ENCODE measurements at regions of chr2 and their contacts with region 1.

Region 1: DNA sequence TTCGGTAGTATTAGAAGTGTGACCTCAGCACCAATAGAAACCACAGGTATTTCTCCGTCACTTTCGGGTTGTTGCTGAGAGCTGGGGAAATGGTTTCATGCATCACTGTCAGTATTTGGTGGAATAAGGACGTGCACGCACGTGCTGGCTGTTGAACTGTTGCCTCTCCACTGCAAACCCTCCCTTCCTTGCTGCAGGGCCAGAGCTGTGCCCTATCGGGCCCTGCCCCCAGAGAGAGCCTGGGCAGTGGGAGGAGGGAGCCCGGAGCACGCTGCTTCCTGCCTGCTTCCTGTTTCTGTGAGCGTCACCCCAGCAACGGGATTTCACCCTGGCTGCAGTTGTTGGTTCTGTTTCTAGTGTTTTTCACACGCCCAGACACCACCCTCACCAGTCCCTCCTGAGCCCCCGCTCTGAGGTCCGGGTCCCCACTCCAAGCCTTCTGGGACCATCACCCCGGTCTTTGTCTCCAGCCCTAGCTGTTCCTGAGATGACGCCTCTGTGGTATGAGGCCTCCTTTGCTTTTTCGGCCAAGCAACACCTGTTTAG is 47.4 kb downstream of the LRRFIP1 start:
- DNase-seq: peak; percentile 95 to 97 (median 96)
- H3K4me3 ChIP-seq: peak overlapping the region; percentile 23 to 75 (median 30)
- H3K4me3 Mint-ChIP-seq: peak overlapping the region; percentile 88 to 96
- H3K27ac ChIP-seq: peak overlapping the region; percentile 91 to 100
- H3K27ac Mint-ChIP-seq: peak overlapping the region; percentile 99 to 100 (median 100)
- H3K4me1 ChIP-seq: peaks cover 76 to 80% of the 10 kb centered on the region in 2 donors
- H3K4me1 Mint-ChIP-seq: peaks cover 82% of the 10 kb centered on the region
- H3K27me3 ChIP-seq: no peaks in the 10 kb centered on the region
- H3K27me3 Mint-ChIP-seq: no peaks in the 10 kb centered on the region
- CTCF ChIP-seq: no peak

Region 2: GRCh38 chr2:237691908-237692600 is 17.2 kb after region 1 on chr2:
- intact Hi-C with region 1: loop called (anchors 2 kb)
- DNase-seq: peak; percentile 88 to 93 (median 92)
- H3K4me3 ChIP-seq: peak overlapping the region; percentile 93 to 100 (median 95)
- H3K4me3 Mint-ChIP-seq: peak overlapping the region; percentile 100
- H3K27ac ChIP-seq: peak overlapping the region; percentile 94 to 100
- H3K27ac Mint-ChIP-seq: peak overlapping the region; percentile 96 to 100 (median 99)
- H3K4me1 ChIP-seq: peaks cover 63 to 79% of the 10 kb centered on the region in 2 donors
- H3K4me1 Mint-ChIP-seq: peaks cover 67% of the 10 kb centered on the region
- H3K27me3 ChIP-seq: no peaks in the 10 kb centered on the region
- H3K27me3 Mint-ChIP-seq: peaks cover 0 to 3% (median 0%) of the 10 kb centered on the region in 3 donors
- CTCF ChIP-seq: no peak

Region 3: DNA sequence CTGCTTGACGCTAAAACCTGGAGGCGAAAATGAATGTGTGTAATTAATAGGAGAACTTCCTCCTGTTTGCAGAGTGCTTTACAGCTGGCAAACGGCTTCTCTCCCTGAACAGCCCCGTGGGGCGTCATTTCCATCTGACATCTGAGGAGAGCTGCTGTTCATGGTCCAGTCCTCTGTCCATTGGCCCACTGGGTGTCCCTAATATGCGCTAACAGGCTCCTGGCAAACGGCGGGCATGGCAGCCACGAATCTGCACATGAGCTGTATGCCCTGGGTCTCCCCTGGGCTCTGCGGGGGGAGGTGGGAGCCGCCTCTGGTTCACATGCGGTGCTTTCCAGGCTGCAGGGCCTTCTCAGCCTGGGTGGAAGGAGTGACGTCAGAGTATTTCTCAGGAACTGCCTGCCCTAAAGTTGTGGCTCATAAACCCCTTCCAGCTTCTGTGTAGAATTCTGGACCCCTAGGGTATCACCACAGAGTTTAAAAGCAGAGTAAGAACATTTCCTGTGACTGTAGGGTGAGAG is 25.8 kb after region 1 on chr2:
- intact Hi-C with region 1: loop called (anchors 2 to 5 kb)
- DNase-seq: peak; percentile 66 to 90 (median 73)
- H3K4me3 ChIP-seq: peak overlapping the region in 1 of 3 experiments; percentile 59
- H3K4me3 Mint-ChIP-seq: peak overlapping the region in 1 of 2 donors; percentile 49
- H3K27ac ChIP-seq: peak overlapping the region; percentile 77 to 85
- H3K27ac Mint-ChIP-seq: peak overlapping the region; percentile 89 to 99 (median 93)
- H3K4me1 ChIP-seq: peaks cover 98 to 100% of the 10 kb centered on the region in 2 donors
- H3K4me1 Mint-ChIP-seq: peaks cover 99% of the 10 kb centered on the region
- H3K27me3 ChIP-seq: no peaks in the 10 kb centered on the region
- H3K27me3 Mint-ChIP-seq: peaks cover 0 to 2% (median 0%) of the 10 kb centered on the region in 3 donors
- CTCF ChIP-seq: no peak

Region 4: GRCh38 chr2:237726401-237726830 is 51.6 kb after region 1 on chr2:
- intact Hi-C with region 1: loop called (anchors 5 kb)
- DNase-seq: peak in 1 of 3 donors; percentile 49
- H3K4me3 ChIP-seq: peak overlapping the region in 1 of 3 experiments; percentile 1
- H3K4me3 Mint-ChIP-seq: no peak overlapping the region
- H3K27ac ChIP-seq: peak overlapping the region; percentile 14 to 72
- H3K27ac Mint-ChIP-seq: peak overlapping the region; percentile 78 to 94 (median 92)
- H3K4me1 ChIP-seq: peaks cover 34 to 62% of the 10 kb centered on the region in 2 donors
- H3K4me1 Mint-ChIP-seq: peaks cover 70% of the 10 kb centered on the region
- H3K27me3 ChIP-seq: no peaks in the 10 kb centered on the region
- H3K27me3 Mint-ChIP-seq: peaks cover 0 to 2% (median 1%) of the 10 kb centered on the region in 3 donors
- CTCF ChIP-seq: no peak

Measured in CD14-positive monocyte (primary cell).